ENCODE measurements at regions of chr4 and their contacts with region 1.

Region 1: GRCh38 chr4:73258686-73259570 is at the start of gene ANKRD17:
- DNase-seq: peak; percentile 89
- H3K4me3 Mint-ChIP-seq: peak within 1 kb of the TSS; percentile 95
- H3K27ac Mint-ChIP-seq: peak within 1 kb of the TSS; percentile 100
- H3K4me1 Mint-ChIP-seq: peaks cover 27% of the 10 kb centered on the region
- H3K27me3 Mint-ChIP-seq: no peaks in the 10 kb centered on the region
- total RNA-seq, gene ANKRD17: 70.0 and 71.4 TPM in 2 replicates

Region 2: DNA sequence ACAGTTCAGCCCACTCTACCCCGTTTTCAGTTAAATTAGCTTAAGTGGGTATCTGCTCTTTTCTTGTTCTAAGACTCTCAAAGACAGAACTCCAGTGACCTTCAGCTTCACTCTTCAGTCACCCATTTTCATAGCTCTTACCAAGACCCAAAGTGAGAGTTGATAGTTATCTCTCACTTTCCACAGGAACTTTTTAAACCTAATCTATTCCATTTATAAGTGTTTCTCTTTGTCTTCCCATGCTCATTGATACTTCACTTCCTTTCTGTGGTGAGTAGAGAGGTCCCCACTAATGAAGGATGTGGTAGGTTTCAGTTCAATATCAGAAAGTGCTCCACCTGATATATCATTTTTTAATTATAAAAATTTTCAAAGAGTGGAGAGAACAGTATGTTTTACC is 222.8 kb before region 1 on chr4:
- intact Hi-C with region 1: loop called (anchors 1 kb)
- DNase-seq: no peak
- H3K4me3 Mint-ChIP-seq: no peak overlapping the region
- H3K27ac Mint-ChIP-seq: no peak overlapping the region
- H3K4me1 Mint-ChIP-seq: peaks cover 8% of the 10 kb centered on the region
- H3K27me3 Mint-ChIP-seq: peaks cover 3% of the 10 kb centered on the region

Region 3: GRCh38 chr4:73127839-73128453 is 131.0 kb before region 1 on chr4:
- intact Hi-C with region 1: loop called (anchors 1 kb)
- DNase-seq: no peak
- H3K4me3 Mint-ChIP-seq: no peak overlapping the region
- H3K27ac Mint-ChIP-seq: peak overlapping the region; percentile 39
- H3K4me1 Mint-ChIP-seq: peaks cover 8% of the 10 kb centered on the region
- H3K27me3 Mint-ChIP-seq: no peaks in the 10 kb centered on the region

Region 4: DNA sequence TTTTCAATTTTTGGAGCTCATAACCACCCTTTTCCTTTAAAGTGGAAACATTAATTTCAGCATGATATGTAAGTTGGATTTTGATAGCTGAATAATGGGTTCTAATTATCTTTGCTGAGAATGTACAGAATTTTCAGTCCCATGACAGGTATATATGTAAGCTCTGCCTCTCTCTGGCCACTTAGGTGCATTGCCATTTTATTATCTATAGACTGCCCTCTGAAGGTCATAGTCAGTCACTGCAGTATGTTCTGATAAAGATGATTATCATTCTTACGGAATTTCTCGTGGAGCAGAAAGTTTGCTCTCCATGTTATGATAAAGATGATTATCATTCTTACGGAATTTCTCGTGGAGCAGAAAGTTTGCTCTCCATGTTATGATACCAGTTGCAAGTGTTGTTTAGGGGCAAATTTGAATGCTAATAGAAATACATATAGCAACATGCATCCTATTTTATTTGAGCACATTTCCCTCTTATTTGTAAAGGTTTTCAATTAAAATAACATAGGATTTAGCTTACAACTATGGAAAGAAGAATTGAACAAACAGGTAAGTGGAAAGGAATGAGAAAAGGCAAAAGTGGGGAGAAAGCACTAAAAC is 187.5 kb after region 1 on chr4:
- intact Hi-C with region 1: loop called (anchors 5 kb)
- DNase-seq: no peak
- H3K4me3 Mint-ChIP-seq: no peak overlapping the region
- H3K27ac Mint-ChIP-seq: no peak overlapping the region
- H3K4me1 Mint-ChIP-seq: no peaks in the 10 kb centered on the region
- H3K27me3 Mint-ChIP-seq: peaks cover 4% of the 10 kb centered on the region